ENCODE measurements at regions of chr3 and their contacts with region 1.

Region 1: DNA sequence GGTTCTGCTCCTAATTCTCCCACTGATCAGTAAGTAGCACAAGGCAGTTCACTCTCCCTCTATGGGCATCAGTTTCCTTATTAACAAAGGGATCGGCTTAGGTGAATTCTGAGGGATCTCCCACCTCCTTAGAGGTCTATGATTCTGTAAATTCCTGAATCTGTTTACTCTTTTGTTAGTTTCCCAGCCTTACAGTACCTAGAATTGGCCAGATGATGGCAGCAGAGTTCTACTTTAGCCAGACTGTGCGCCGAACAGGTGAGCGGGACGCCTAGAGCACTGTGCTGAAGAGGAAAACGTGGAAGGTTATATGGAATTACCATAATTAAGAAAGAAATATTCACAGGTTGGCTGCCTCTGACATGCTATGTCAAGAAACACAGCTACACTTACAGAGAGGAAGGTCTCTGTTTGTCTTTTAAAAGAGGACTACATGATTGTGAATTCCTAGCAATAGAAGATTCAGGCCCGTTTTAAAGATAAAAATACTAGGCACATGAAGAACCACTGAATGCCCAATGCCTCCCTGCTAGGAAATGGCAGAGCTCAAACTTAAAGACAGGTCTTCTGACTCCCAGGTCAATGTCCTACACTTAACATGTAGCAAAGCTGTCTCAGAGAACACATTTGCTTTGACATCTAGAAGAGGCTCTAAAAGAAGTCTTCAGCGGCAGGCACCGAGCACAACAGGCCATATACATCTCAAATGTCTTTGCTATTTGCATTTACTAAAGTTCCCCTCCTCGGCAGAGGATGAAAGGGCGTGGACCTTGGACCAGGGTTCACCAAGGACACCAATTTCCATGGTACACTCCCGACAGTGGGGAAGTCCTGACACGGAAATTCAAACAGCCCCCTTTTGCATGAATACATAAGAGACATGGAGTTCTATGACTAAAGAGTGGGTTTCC is 259.9 kb downstream of the FGF12 start:
- DNase-seq: peak; percentile 37
- ATAC-seq: peak; percentile 73

Region 2: GRCh38 chr3:192802957-192803899 is 335.7 kb after region 1 on chr3:
- intact Hi-C with region 1: loop called (anchors 10 kb)
- DNase-seq: no peak
- ATAC-seq: peak; percentile 66